CD8-positive, alpha-beta T cell (primary cell): ENCODE measurements at regions of chr16 and their contacts with region 1.

Region 1: GRCh38 chr16:2926650-2927646 is 15.2 kb downstream of the FLYWCH1 start:
- DNase-seq: peak; percentile 75 to 94 (median 88)
- ATAC-seq: peak; percentile 100
- H3K4me3 ChIP-seq: no peak overlapping the region
- H3K4me3 Mint-ChIP-seq: peak overlapping the region; percentile 6
- H3K27ac ChIP-seq: no peak overlapping the region
- H3K27ac Mint-ChIP-seq: no peak overlapping the region
- H3K4me1 ChIP-seq: peaks cover 4% of the 10 kb centered on the region
- H3K4me1 Mint-ChIP-seq: peaks cover 11% of the 10 kb centered on the region
- H3K27me3 ChIP-seq: no peaks in the 10 kb centered on the region
- H3K27me3 Mint-ChIP-seq: no peaks in the 10 kb centered on the region
- CTCF ChIP-seq: peak; percentile 93

Region 2: GRCh38 chr16:2663553-2664546 is 263.1 kb before region 1 on chr16:
- CTCF ChIA-PET with region 1: no interaction called
- POLR2A ChIA-PET with region 1: no interaction called
- intact Hi-C with region 1: loop called in 1 of 2 experiments (anchors 5 kb)
- DNase-seq: peak in 3 of 9 experiments; percentile 34 to 61 (median 56)
- ATAC-seq: peak; percentile 70
- H3K4me3 ChIP-seq: no peak overlapping the region
- H3K4me3 Mint-ChIP-seq: no peak overlapping the region
- H3K27ac ChIP-seq: peak overlapping the region in 1 of 2 experiments; percentile 36
- H3K27ac Mint-ChIP-seq: peak overlapping the region; percentile 58
- H3K4me1 ChIP-seq: no peaks in the 10 kb centered on the region
- H3K4me1 Mint-ChIP-seq: peaks cover 27% of the 10 kb centered on the region
- H3K27me3 ChIP-seq: no peaks in the 10 kb centered on the region
- H3K27me3 Mint-ChIP-seq: no peaks in the 10 kb centered on the region
- CTCF ChIP-seq: no peak

Region 3: GRCh38 chr16:2838928-2839327 is 88.0 kb before region 1 on chr16:
- CTCF ChIA-PET with region 1: interaction called, 9 read pairs
- POLR2A ChIA-PET with region 1: no interaction called
- intact Hi-C with region 1: loop called (anchors 1 to 2 kb)
- DNase-seq: peak; percentile 34 to 80 (median 63)
- ATAC-seq: peak; percentile 76
- H3K4me3 ChIP-seq: no peak overlapping the region
- H3K4me3 Mint-ChIP-seq: no peak overlapping the region
- H3K27ac ChIP-seq: no peak overlapping the region
- H3K27ac Mint-ChIP-seq: peak overlapping the region; percentile 64
- H3K4me1 ChIP-seq: peaks cover 49% of the 10 kb centered on the region
- H3K4me1 Mint-ChIP-seq: peaks cover 35% of the 10 kb centered on the region
- H3K27me3 ChIP-seq: peaks cover 0 to 4% of the 10 kb centered on the region in 2 experiments
- H3K27me3 Mint-ChIP-seq: peaks cover 10% of the 10 kb centered on the region
- CTCF ChIP-seq: peak; percentile 63

Region 4: GRCh38 chr16:2905431-2906387 is 21.2 kb before region 1 on chr16:
- CTCF ChIA-PET with region 1: interaction called, 11 read pairs
- POLR2A ChIA-PET with region 1: no interaction called
- intact Hi-C with region 1: loop called (anchors 1 kb)
- DNase-seq: peak; percentile 73 to 96 (median 85)
- ATAC-seq: peak; percentile 83
- H3K4me3 ChIP-seq: peak overlapping the region; percentile 86 to 88
- H3K4me3 Mint-ChIP-seq: peak overlapping the region; percentile 91
- H3K27ac ChIP-seq: peak overlapping the region in 1 of 2 experiments; percentile 22
- H3K27ac Mint-ChIP-seq: peak overlapping the region; percentile 55
- H3K4me1 ChIP-seq: peaks cover 11% of the 10 kb centered on the region
- H3K4me1 Mint-ChIP-seq: peaks cover 23% of the 10 kb centered on the region
- H3K27me3 ChIP-seq: peaks cover 0 to 2% of the 10 kb centered on the region in 2 experiments
- H3K27me3 Mint-ChIP-seq: no peaks in the 10 kb centered on the region
- CTCF ChIP-seq: no peak

Region 5: DNA sequence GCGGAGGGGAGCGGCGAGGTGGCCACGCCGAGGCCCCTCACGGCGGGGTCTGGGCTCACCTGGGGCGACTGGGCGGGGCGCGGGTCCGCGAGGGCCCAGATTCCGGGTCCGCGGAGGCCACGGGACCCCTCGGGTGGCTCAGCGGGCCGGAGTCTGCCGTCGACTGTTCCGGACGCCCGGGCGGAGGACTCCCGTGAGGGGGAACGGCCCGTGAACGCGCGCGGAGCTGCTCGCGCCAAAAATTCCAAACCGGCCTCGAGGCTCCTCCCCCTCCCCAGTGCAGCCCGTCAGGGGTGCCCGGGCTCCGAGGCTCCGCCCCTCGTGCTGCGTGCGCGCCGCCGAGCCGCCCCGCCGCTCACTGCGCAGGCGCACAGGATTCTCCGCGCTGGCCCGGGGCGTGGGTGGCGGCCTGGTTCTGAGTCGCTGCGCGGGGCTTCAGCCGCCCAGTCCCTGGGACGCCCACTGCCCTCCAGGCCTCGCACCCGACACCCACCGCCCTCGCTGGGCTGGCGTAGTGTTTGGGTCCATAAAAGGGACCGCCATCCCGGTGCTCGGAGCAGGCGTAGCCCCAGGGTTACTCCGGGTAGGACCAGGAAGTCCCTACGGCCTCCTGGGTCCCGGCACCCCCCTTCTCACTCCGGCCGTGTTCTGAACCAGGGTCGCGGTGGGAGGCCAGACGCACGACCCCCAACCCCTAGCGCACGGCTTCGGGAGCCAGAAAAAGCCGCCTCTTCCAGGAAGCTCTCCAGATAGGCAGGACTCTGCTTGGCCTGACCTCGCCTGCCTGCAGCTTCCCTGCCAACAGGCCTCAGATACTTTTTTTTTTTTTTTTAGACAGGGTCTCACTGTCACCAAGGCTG is 53.5 kb after region 1 on chr16 and contains the start of gene PKMYT1:
- CTCF ChIA-PET with region 1: interaction called, 4 read pairs
- POLR2A ChIA-PET with region 1: no interaction called
- intact Hi-C with region 1: loop called in 1 of 2 experiments (anchors 5 kb)
- DNase-seq: peak; percentile 86 to 97 (median 95)
- ATAC-seq: peak; percentile 96
- H3K4me3 ChIP-seq: peak within 1 kb of the TSS; percentile 94 to 99
- H3K4me3 Mint-ChIP-seq: peak within 1 kb of the TSS; percentile 77
- H3K27ac ChIP-seq: peak within 1 kb of the TSS; percentile 79 to 86
- H3K27ac Mint-ChIP-seq: peak within 1 kb of the TSS; percentile 60
- H3K4me1 ChIP-seq: peaks cover 14% of the 10 kb centered on the region
- H3K4me1 Mint-ChIP-seq: peaks cover 16% of the 10 kb centered on the region
- H3K27me3 ChIP-seq: peaks cover 0 to 7% of the 10 kb centered on the region in 2 experiments
- H3K27me3 Mint-ChIP-seq: no peaks in the 10 kb centered on the region
- CTCF ChIP-seq: no peak
- total RNA-seq, gene PKMYT1: 0.44 to 0.81 TPM